ENCODE measurements at regions of chr14 and their contacts with region 1.

Region 1: GRCh38 chr14:103057365-103058096 is at the start of gene CDC42BPB:
- DNase-seq: peak; percentile 82 to 100
- H3K4me3 ChIP-seq: peak within 1 kb of the TSS; percentile 96
- H3K27ac ChIP-seq: peak within 1 kb of the TSS; percentile 48
- H3K4me1 ChIP-seq: peaks cover 44% of the 10 kb centered on the region
- H3K27me3 ChIP-seq: no peaks in the 10 kb centered on the region
- CTCF ChIP-seq: no peak
- total RNA-seq, gene CDC42BPB: 203 and 209 TPM in 2 replicates

Region 2: DNA sequence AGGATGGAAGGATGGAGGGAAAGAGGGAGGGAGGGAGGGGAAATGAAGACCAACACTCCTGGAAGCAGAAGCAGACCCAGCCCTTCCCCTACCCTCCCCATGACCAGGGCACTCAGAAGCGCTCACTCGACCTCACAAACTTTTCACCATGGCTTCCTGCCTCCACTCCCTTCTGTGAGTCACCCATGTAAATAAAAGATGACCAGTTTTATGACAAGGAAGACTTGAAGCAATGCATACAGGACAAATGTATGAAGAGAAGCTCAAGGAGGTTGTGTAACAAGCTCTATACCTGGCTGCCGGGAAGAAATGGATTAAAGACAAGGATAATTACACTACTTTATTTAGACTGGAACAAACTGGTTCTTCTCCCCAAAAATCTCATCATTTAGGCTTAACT is 64.0 kb before region 1 on chr14:
- CTCF ChIA-PET with region 1: interaction called, 3 read pairs
- POLR2A ChIA-PET with region 1: interaction called, 3 read pairs
- intact Hi-C with region 1: loop called (anchors 1 kb)
- DNase-seq: peak; percentile 80 to 100
- H3K4me3 ChIP-seq: peak overlapping the region; percentile 0; the same call in 1 of the 2 replicates
- H3K27ac ChIP-seq: peak overlapping the region; percentile 80
- H3K4me1 ChIP-seq: peaks cover 32% of the 10 kb centered on the region
- H3K27me3 ChIP-seq: no peaks in the 10 kb centered on the region
- CTCF ChIP-seq: no peak

Region 3: DNA sequence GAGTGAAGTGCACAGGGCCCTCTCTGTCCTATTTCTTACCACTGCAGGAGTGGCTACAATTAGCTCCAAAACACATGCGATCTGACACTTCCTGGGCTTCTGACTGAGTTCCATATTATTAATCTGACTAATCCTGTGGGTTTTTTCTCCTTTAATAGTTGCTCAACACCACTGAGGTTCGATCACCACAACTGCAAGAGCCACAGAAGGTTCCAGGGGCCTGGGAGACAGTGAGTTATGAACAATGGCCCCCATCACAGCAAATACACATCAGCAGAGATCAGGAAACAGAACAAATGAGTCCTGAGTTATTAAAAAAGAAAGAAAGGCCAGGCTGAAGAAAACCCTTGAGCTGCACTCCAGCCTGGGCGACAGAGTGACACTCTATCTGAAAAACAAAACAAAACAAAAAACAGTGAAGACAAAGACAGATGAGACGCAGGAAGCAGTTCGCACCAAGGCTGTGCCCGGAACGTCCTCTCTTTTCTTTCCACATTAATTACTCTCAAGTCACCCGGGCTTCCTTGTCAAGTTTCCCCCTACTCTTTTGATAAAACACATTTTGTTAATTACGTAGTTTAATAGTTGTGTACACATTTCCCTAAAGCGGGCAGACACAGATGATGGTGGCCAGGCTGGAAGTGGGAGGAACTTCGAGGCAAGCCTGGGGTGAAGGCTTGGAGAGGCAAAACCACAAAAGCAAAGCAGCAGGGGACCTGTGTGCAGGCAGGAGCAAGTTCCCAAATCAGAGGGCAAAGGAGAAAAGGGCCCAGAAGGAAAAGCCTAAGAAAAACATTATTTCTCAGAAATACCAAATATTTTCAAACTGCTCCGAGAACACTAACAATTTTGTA is 42.8 kb before region 1 on chr14:
- CTCF ChIA-PET with region 1: interaction called, 3 read pairs
- POLR2A ChIA-PET with region 1: interaction called, 8 read pairs
- intact Hi-C with region 1: loop called (anchors 2 kb)
- DNase-seq: peak in 1 of 2 experiments; percentile 69
- H3K4me3 ChIP-seq: peak overlapping the region; percentile 2; the same call in 1 of the 2 replicates
- H3K27ac ChIP-seq: peak overlapping the region; percentile 58
- H3K4me1 ChIP-seq: peaks cover 70% of the 10 kb centered on the region
- H3K27me3 ChIP-seq: no peaks in the 10 kb centered on the region
- CTCF ChIP-seq: no peak

Region 4: DNA sequence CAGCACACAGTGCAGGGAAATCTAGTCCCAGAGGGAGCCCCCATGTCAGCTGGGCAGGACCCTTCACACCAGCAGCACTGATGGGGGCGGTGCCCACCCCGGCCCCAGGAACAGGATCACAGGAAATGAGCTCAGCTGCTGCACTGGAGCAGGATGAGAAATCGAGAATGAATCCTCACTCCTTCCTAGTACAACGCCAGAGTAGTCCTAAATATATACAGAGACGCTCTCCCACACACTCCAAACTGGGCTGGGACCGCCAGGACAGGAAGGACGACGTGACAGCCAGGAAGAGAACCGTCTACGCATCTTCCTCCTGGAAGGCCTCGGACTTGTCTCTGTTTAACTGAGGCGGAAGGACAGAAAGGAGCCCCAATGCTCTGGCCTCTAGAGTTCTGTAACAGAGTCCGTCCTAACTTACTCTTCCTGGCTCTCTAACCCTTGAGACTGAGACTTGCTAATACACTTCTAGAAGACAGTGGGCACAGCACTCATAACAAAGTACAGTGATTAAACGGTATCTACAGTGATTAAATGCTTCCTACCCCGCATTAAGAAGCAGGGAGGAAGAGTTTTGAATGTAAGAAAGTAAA is 33.6 kb before region 1 on chr14:
- CTCF ChIA-PET with region 1: interaction called, 4 read pairs
- POLR2A ChIA-PET with region 1: interaction called, 5 read pairs
- intact Hi-C with region 1: loop called (anchors 1 kb)
- DNase-seq: no peak
- H3K4me3 ChIP-seq: no peak overlapping the region
- H3K27ac ChIP-seq: peak overlapping the region; percentile 89
- H3K4me1 ChIP-seq: peaks cover 63% of the 10 kb centered on the region
- H3K27me3 ChIP-seq: no peaks in the 10 kb centered on the region
- CTCF ChIP-seq: no peak

Region 5: GRCh38 chr14:103045371-103045869 is 12.1 kb before region 1 on chr14:
- CTCF ChIA-PET with region 1: interaction called, 17 read pairs
- POLR2A ChIA-PET with region 1: no interaction called
- intact Hi-C with region 1: no loop called
- DNase-seq: no peak
- H3K4me3 ChIP-seq: no peak overlapping the region
- H3K27ac ChIP-seq: no peak overlapping the region
- H3K4me1 ChIP-seq: peaks cover 8% of the 10 kb centered on the region; the same call in 1 of the 2 replicates
- H3K27me3 ChIP-seq: no peaks in the 10 kb centered on the region
- CTCF ChIP-seq: no peak

Measured in PC-9 (cell line).